PC-9 (cell line): ENCODE measurements at regions of chr3 and their contacts with region 1.

Region 1: DNA sequence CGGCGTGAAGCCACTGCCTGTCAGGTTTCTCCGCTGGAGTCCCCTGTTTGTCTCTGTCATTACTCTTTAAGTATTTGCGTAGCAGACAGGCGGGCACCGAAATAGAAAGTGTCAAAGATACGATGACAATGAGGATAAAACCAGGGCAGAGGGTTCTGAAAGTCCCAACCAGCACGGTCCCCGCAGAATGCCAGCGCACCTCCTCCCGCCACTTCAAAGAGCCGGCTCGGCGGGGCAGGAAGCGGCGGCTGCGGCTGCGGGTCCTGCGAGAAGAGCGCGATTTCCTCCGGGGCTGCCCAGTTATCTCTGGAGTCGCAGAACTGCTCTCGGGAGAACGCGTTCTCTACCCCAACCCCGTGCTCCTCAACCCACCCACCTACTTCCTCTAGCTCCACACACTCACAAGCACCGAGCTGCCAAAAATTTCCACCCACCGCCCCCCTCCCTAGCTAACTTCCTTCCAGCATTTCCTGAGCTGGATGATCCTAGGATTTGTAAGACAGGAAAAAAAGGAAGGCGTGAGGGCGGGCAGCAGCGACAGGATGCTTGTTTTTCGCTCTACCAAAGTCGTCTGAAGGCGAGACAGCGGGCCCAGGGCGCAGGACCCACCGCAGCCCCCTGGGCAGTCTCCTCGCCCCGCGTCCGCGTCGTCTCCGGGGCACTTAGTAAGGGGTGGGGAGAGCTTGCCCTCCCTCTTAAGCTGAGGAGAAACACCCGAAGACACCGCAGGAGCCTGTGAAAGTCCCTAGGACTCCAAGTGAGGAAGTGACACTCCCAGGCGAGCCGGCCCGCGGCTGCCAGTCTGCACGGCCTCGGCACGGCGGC is at the start of gene ARHGAP31:
- DNase-seq: peak; percentile 47 to 50
- H3K4me3 ChIP-seq: peak within 1 kb of the TSS; percentile 85
- H3K27ac ChIP-seq: peak within 1 kb of the TSS; percentile 27; the same call in 1 of the 2 replicates
- H3K4me1 ChIP-seq: peaks cover 13% of the 10 kb centered on the region
- H3K27me3 ChIP-seq: no peaks in the 10 kb centered on the region
- CTCF ChIP-seq: no peak
- total RNA-seq, gene ARHGAP31: 0.48 and 0.58 TPM in 2 replicates

Region 2: DNA sequence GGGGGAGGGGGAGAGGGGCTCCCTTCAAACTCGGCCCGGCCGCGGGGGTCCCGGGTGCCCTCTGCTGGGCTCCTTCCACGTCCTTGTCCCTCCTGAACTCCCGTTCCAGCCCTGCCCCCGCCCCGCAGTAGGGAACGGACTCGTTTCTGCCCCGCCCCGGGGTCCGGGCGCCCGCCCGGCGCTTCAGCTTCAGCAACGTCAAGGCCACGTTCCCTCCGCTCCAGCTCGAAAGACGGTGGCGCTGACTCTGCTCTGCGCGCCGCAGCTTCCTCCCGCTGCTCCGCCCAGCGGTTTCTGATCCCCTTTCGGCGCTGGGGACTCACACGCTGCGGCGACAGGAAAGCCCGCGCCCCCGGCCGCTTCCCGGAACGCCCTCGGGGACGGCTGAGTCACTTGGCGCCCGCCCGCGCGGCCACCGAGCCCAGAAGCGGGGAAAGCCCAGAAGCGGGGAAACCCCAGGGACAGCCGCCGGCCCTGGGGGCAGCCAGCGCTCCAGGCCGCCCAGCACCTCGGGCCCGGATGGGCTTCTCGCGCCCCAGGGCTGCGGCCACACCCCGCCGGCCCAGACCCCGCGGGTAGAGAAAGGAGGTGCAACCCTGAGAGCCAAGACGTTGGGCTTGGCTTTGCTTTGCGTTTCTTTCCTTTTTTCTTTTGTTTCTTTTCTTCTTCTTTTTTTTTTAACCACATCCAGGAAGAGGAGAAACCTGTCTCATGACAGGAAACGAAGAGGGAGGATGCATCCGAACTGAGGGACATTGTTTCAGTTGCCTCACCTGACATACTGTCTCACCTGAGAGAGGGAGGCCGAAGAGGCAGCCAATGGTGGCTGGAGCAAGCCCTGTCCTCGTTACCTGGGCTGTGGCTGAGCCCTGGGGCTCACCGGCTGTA is 29.0 kb after region 1 on chr3:
- CTCF ChIA-PET with region 1: no interaction called
- POLR2A ChIA-PET with region 1: no interaction called
- intact Hi-C with region 1: loop called (anchors 2 kb)
- DNase-seq: peak; percentile 75 to 85
- H3K4me3 ChIP-seq: peak overlapping the region; percentile 81
- H3K27ac ChIP-seq: peak overlapping the region; percentile 73
- H3K4me1 ChIP-seq: peaks cover 15% of the 10 kb centered on the region
- H3K27me3 ChIP-seq: no peaks in the 10 kb centered on the region
- CTCF ChIP-seq: no peak; the same call in 1 of the 2 replicates

Region 3: DNA sequence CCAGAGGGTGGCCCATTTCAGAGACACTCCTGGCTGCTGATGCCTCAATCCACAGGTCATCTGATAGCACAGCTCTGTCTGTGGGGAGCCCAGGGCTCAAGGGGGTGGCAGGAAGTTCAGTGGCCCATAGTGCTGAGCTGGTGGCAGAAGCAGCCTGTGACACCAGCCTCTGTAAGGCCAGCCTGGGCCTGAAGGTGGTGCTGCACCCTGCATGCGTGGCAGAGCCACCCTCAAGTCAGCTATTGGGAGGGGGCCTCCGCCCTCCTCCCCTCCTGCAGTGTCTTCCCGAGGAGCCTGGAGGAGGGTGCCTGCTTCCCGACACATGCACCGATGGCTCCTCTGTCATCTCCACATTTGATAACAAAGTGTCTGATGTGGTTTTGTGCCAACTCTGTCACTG is 306.6 kb after region 1 on chr3:
- CTCF ChIA-PET with region 1: no interaction called
- POLR2A ChIA-PET with region 1: interaction called, 13 read pairs
- intact Hi-C with region 1: no loop called
- DNase-seq: no peak
- H3K4me3 ChIP-seq: no peak overlapping the region
- H3K27ac ChIP-seq: no peak overlapping the region
- H3K4me1 ChIP-seq: no peaks in the 10 kb centered on the region
- H3K27me3 ChIP-seq: no peaks in the 10 kb centered on the region
- CTCF ChIP-seq: peak; percentile 46; the same call in 1 of the 2 replicates